ENCODE measurements at regions of chr10 and their contacts with region 1.

Region 1: GRCh38 chr10:6088721-6089390 is at the start of gene RBM17:
- DNase-seq: peak; percentile 82
- ATAC-seq: peak; percentile 88
- H3K4me3 ChIP-seq: peak within 1 kb of the TSS; percentile 99
- H3K27ac ChIP-seq: peak within 1 kb of the TSS; percentile 81
- H3K4me1 ChIP-seq: peaks cover 3% of the 10 kb centered on the region; the same call in 1 of the 2 replicates
- H3K27me3 ChIP-seq: no peaks in the 10 kb centered on the region
- CTCF ChIP-seq: peak; percentile 100; a peak in 5 of 6 replicates
- EP300 ChIP-seq: no peak; a peak in 1 of 4 replicates
- POLR2A ChIP-seq: peak; percentile 85
- RAD21 ChIP-seq: peak; percentile 95
- polyA plus RNA-seq, gene RBM17: 28.4 to 45.0 TPM

Region 2: DNA sequence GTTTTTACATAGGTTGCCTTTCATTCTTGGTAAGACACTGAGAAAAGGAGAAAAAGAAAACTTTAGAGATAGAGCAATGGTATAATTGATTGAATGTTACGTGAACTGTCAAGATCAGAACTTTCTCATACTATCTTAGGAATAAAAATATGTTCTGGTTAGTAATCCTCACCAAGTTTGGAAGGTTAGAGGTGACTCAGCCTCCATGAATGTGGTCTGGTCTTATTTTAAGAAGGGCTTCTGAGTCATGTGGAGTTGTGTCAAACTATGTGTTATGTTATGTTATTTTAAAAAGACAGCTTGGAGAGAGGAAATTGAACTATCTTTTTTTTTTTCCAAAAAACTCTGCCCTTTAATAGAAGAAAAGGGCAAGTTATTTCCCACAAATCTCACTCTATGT is 1845.2 kb before region 1 on chr10:
- CTCF ChIA-PET with region 1: no interaction called
- POLR2A ChIA-PET with region 1: no interaction called
- RAD21 ChIA-PET with region 1: no interaction called
- SMC1A ChIA-PET with region 1: no interaction called
- in situ Hi-C with region 1: no loop called
- intact Hi-C with region 1: no loop called
- DNase-seq: no peak
- ATAC-seq: no peak
- H3K4me3 ChIP-seq: no peak overlapping the region
- H3K27ac ChIP-seq: no peak overlapping the region
- H3K4me1 ChIP-seq: no peaks in the 10 kb centered on the region
- H3K27me3 ChIP-seq: no peaks in the 10 kb centered on the region
- CTCF ChIP-seq: no peak
- EP300 ChIP-seq: no peak
- POLR2A ChIP-seq: no peak
- RAD21 ChIP-seq: no peak

Region 3: GRCh38 chr10:6009150-6009549 is 79.7 kb before region 1 on chr10:
- CTCF ChIA-PET with region 1: interaction called, 142 read pairs
- POLR2A ChIA-PET with region 1: interaction called, 3 read pairs
- RAD21 ChIA-PET with region 1: interaction called, 45 read pairs
- SMC1A ChIA-PET with region 1: interaction called, 81 read pairs
- in situ Hi-C with region 1: loop called (anchors 5 kb)
- intact Hi-C with region 1: loop called (anchors 1 kb)
- DNase-seq: no peak
- ATAC-seq: peak; percentile 53
- H3K4me3 ChIP-seq: no peak overlapping the region
- H3K27ac ChIP-seq: no peak overlapping the region
- H3K4me1 ChIP-seq: no peaks in the 10 kb centered on the region
- H3K27me3 ChIP-seq: no peaks in the 10 kb centered on the region
- CTCF ChIP-seq: no peak
- EP300 ChIP-seq: no peak
- POLR2A ChIP-seq: no peak
- RAD21 ChIP-seq: no peak

Region 4: DNA sequence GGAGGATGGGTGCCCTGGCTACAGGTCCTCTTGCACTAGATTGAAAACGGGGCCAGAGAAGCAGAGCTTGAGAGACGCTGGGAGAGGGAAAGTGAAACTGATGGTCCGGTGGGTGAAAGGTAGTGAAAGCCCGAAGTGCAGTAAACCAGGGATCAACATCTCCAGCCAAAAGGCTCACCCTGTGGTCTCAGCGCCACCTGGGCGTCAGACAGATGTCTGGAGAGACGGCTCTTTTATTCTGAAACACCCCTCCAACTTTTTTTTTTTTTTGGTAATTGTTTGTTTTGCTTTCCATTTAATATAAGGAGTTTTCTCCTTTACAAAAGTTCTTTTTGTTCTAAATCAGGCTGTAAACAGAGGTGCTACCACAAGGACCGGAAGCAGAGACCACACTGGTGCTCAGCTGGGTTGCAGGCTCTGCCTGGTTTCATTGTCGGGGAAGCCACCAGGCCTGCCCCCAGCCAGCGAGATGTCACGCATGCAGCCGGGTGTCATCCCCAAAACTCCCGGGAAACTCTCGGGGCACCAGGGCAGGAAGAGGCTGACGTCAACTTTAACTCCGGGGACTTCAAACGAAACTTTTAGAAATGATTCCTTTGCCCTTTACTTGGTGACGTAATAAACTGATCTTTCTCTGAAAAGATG is 37.9 kb before region 1 on chr10:
- CTCF ChIA-PET with region 1: interaction called, 95 read pairs
- POLR2A ChIA-PET with region 1: interaction called, 8 read pairs
- RAD21 ChIA-PET with region 1: interaction called, 21 read pairs
- SMC1A ChIA-PET with region 1: interaction called, 61 read pairs
- in situ Hi-C with region 1: no loop called
- intact Hi-C with region 1: loop called (anchors 1 kb)
- DNase-seq: peak; percentile 89
- ATAC-seq: peak; percentile 75
- H3K4me3 ChIP-seq: peak overlapping the region; percentile 48; the same call in 1 of the 2 replicates
- H3K27ac ChIP-seq: peak overlapping the region; percentile 77
- H3K4me1 ChIP-seq: peaks cover 53% of the 10 kb centered on the region
- H3K27me3 ChIP-seq: no peaks in the 10 kb centered on the region
- CTCF ChIP-seq: peak; percentile 24 to 52 (median 41); a peak in 4 of 6 replicates
- EP300 ChIP-seq: peak; percentile 94 to 96
- POLR2A ChIP-seq: peak; percentile 67
- RAD21 ChIP-seq: peak; percentile 74

Region 5: GRCh38 chr10:6068422-6068821 is 20.4 kb before region 1 on chr10:
- CTCF ChIA-PET with region 1: interaction called, 53 read pairs
- POLR2A ChIA-PET with region 1: interaction called, 7 read pairs
- RAD21 ChIA-PET with region 1: interaction called, 10 read pairs
- SMC1A ChIA-PET with region 1: interaction called, 14 read pairs
- in situ Hi-C with region 1: no loop called
- intact Hi-C with region 1: no loop called
- DNase-seq: no peak
- ATAC-seq: peak; percentile 86
- H3K4me3 ChIP-seq: no peak overlapping the region
- H3K27ac ChIP-seq: no peak overlapping the region
- H3K4me1 ChIP-seq: peaks cover 30% of the 10 kb centered on the region
- H3K27me3 ChIP-seq: no peaks in the 10 kb centered on the region; a peak in 1 of 4 replicates
- CTCF ChIP-seq: no peak
- EP300 ChIP-seq: no peak
- POLR2A ChIP-seq: no peak
- RAD21 ChIP-seq: no peak

Region 6: GRCh38 chr10:6136215-6137201 is 47.7 kb after region 1 on chr10:
- CTCF ChIA-PET with region 1: interaction called, 11 read pairs
- POLR2A ChIA-PET with region 1: interaction called, 3 read pairs
- RAD21 ChIA-PET with region 1: interaction called, 6 read pairs
- SMC1A ChIA-PET with region 1: interaction called, 13 read pairs
- in situ Hi-C with region 1: no loop called
- intact Hi-C with region 1: no loop called
- DNase-seq: peak; percentile 66
- ATAC-seq: peak; percentile 71
- H3K4me3 ChIP-seq: peak overlapping the region; percentile 54
- H3K27ac ChIP-seq: peak overlapping the region; percentile 63
- H3K4me1 ChIP-seq: peaks cover 38% of the 10 kb centered on the region
- H3K27me3 ChIP-seq: no peaks in the 10 kb centered on the region
- CTCF ChIP-seq: 0 out of 6 replicates have a peak, but pooled peaks of 1 of the 3 experiments have one; percentile 1
- EP300 ChIP-seq: peak in 1 of 2 experiments; percentile 74; a peak in 2 of 4 replicates
- POLR2A ChIP-seq: no peak
- RAD21 ChIP-seq: no peak

Measured in GM12878 (cell line).